ENCODE measurements at regions of chr22 and their contacts with region 1.

Region 1: DNA sequence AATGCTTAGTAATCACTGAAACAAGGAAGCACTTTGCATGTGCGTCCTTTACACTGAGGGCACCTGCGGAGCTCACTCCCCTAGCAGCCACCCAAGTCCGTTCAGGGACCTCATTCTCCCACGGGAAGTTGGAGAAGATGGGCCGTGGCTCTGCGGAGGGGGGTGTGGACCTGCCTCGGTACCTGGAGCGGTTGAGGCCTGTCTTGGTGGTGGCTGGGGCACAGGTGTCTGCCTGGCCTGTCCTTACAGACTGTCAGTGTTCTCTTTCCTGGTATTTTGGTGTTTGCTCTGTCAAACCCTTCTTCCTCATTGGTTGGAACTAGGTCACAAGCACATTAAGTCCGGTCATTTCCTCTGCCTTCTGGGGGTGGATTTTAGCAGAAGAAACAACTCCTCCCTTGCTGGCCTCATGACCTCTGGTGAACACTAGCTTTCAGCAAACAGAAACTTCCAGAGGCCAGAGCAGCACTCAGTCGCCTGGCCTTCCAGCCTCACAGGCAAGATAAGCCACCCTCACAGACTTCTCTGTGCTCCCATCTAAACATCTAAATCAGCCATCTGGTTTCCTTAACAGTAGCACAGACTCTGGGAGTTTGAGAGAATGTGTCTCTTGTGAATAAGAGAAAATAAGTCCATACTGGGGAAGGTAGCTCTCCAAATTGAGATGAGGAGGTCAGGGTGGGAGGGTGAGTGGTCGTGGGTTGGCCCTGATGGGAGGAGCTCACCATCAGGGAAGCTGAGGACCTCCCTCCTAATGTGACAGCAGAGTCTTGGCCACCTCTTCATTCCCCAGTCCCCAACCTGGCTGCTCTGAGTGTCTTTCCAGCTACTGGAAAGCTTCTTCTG is 8.6 kb downstream of the SNAP29 start:
- DNase-seq: no peak
- H3K4me3 ChIP-seq: no peak overlapping the region
- H3K27ac ChIP-seq: peak overlapping the region in 3 of 4 donors; percentile 74 to 89 (median 85)
- H3K4me1 ChIP-seq: peaks cover 8 to 44% (median 8%) of the 10 kb centered on the region in 3 donors
- H3K27me3 ChIP-seq: no peaks in the 10 kb centered on the region
- CTCF ChIP-seq: no peak
- POLR2A ChIP-seq: peak in 2 of 4 donors; percentile 18 to 43

Region 2: DNA sequence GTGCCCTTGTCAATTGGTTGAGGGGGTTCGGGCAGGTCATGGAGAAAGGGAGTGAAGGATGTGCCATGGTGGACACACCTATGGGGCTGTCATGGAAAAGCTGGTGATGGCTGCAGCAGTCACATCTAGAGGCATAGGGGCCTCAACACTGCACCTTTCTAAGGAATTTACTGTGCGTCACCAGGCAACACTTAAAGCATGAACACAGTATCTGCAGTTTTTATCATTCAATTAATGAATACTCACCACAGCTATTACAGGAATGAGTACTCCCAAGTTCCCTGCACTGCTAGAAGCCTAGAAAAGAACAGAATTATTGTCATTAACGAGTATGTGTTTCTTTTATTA is 74.5 kb before region 1 on chr22:
- intact Hi-C with region 1: loop called (anchors 10 kb)
- DNase-seq: no peak
- H3K4me3 ChIP-seq: no peak overlapping the region
- H3K27ac ChIP-seq: no peak overlapping the region
- H3K4me1 ChIP-seq: no peaks in the 10 kb centered on the region
- H3K27me3 ChIP-seq: no peaks in the 10 kb centered on the region
- CTCF ChIP-seq: no peak
- POLR2A ChIP-seq: no peak

Region 3: GRCh38 chr22:20916983-20917810 is 49.8 kb after region 1 on chr22 and contains the start of gene CRKL:
- intact Hi-C with region 1: loop called (anchors 10 kb)
- DNase-seq: peak; percentile 59
- H3K4me3 ChIP-seq: peak within 1 kb of the TSS; percentile 74 to 100 (median 90)
- H3K27ac ChIP-seq: peak within 1 kb of the TSS; percentile 93 to 100 (median 100)
- H3K4me1 ChIP-seq: peaks cover 25 to 56% (median 34%) of the 10 kb centered on the region in 3 donors
- H3K27me3 ChIP-seq: no peaks in the 10 kb centered on the region
- CTCF ChIP-seq: peak; percentile 87 to 99 (median 96)
- POLR2A ChIP-seq: peak in 3 of 4 donors; percentile 90 to 99 (median 98)
- total RNA-seq, gene CRKL: 38.2 to 46.2 (median 44.4) TPM